ENCODE measurements at regions of chr9 and their contacts with region 1.

Region 1: DNA sequence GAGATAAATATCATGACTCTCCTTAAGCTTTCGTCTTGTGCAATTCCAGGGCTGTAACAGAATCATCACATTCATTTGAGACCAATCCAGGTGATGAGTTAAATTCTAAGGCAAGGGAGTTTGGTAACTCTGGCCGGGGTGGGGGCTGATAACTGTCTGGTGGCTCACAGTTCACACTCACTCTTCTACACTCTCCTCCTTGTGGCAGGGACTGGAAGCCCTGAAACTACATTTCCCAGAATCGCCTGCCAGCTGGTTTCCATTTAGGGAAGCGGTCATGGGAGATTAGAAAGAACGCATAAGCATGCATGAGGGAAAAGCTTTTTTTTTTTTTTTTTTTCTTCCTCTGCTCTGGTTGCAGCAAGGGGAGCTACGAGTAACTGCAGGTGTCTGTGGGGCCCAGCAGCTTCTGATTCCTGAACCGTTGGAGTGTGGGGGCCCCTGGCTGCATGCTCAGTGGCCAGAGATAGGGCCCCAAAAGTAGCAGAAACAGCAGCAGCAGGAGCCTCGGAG is 154.8 kb upstream of the TBC1D2 start:
- DNase-seq: peak; percentile 52
- H3K4me3 ChIP-seq: no peak overlapping the region
- CTCF ChIP-seq: peak; percentile 60

Region 2: DNA sequence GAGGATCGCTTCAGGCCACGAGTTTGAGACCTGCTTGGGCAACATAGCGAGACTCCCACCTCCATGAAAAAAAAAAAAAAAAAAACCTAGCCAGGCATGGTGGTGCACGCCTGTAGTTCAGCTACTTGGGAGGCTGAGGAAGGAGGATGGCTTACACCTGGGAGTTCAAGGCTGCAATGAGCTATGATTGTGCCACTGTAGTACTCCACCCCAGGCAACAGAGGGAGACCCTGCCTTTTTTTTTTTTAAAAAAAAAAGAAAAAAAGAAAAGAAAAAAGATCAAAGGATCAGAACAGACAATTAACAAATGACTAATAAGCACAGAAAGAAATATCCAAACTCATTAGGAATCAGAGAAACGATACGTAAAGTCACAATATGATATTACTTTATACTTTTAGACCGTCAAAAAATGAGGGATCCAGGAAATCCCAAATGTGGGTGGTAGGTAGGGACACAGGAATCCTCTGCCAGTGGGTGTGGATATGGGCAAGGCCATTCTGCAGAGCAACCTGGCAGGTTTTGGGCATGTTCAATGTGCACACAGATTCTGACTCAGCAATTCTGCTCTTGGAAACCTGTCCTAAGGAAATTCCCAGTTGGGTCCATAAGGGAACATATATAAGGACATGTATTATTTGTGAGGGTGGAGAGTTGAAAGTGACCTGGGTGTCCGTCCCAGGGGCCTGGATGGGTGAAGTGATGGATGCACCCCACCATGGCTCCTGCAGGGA is 10.1 kb before region 1 on chr9:
- CTCF ChIA-PET with region 1: interaction called, 16 read pairs
- POLR2A ChIA-PET with region 1: no interaction called
- DNase-seq: no peak
- H3K4me3 ChIP-seq: no peak overlapping the region
- CTCF ChIP-seq: no peak

Measured in AG04449 (cell line).